K562 (cell line): ENCODE measurements at regions of chr17 and their contacts with region 1.

Region 1: GRCh38 chr17:74790161-74791054 is 14.3 kb upstream of the NAT9 start:
- DNase-seq: no peak
- ATAC-seq: no peak
- H3K4me3 ChIP-seq: no peak overlapping the region
- H3K27ac ChIP-seq: no peak overlapping the region
- H3K4me1 ChIP-seq: peaks cover 0 to 4% of the 10 kb centered on the region in 2 experiments; a peak in 1 of 5 replicates
- H3K27me3 ChIP-seq: no peaks in the 10 kb centered on the region
- CTCF ChIP-seq: no peak
- EP300 ChIP-seq: no peak
- POLR2A ChIP-seq: no peak
- RAD21 ChIP-seq: no peak

Region 2: GRCh38 chr17:74859459-74860228 is 69.2 kb after region 1 on chr17 and contains the start of gene GRIN2C:
- CTCF ChIA-PET with region 1: interaction called, 19 read pairs
- POLR2A ChIA-PET with region 1: no interaction called
- in situ Hi-C with region 1: loop called (anchors 5 kb)
- intact Hi-C with region 1: no loop called
- DNase-seq: peak in 3 of 4 experiments; percentile 52 to 63 (median 60)
- ATAC-seq: 0 out of 3 replicates have a peak, but pooled peaks have one; percentile 23
- H3K4me3 ChIP-seq: peak within 1 kb of the TSS; percentile 24
- H3K27ac ChIP-seq: no peak within 1 kb of the TSS
- H3K4me1 ChIP-seq: peaks cover 2 to 51% of the 10 kb centered on the region in 2 experiments
- H3K27me3 ChIP-seq: peaks cover 0 to 21% of the 10 kb centered on the region in 2 experiments; a peak in 2 of 5 replicates
- CTCF ChIP-seq: peak in 1 of 3 experiments; percentile 45; a peak in 1 of 6 replicates
- EP300 ChIP-seq: no peak
- POLR2A ChIP-seq: no peak
- RAD21 ChIP-seq: no peak
- polyA plus RNA-seq, gene GRIN2C: not detected

Region 3: DNA sequence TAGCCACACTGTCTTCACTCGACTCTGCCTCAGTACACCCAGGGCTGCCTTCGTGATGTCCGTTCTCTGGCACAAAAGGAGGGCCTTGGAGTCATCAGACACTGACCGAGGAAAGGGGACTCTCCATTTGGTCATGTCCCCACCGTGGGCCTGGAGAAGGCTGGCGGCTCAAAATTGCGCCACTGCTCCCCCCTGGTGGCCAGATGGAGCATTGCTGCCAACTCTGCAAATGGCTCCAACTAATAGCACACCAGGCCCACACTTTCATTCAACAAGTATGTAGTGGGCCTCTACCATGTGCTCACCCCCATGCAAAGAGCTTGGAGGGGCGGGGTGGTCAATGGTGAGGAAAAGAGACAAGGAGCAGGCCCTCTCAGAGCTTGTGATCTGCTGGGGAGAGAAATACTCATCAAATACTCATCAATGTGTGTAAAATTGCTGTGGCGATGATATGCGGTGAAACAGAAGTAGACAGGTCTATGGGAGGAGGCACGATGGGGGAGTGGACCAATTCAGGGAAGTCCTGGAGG is 74.5 kb after region 1 on chr17:
- CTCF ChIA-PET with region 1: interaction called, 19 read pairs
- POLR2A ChIA-PET with region 1: interaction called, 3 read pairs
- in situ Hi-C with region 1: no loop called
- intact Hi-C with region 1: loop called (anchors 1 kb)
- DNase-seq: peak; percentile 57 to 83 (median 70)
- ATAC-seq: peak; percentile 74
- H3K4me3 ChIP-seq: no peak overlapping the region
- H3K27ac ChIP-seq: 0 out of 3 replicates have a peak overlapping the region, but pooled peaks have one; percentile 31
- H3K4me1 ChIP-seq: peaks cover 40 to 85% of the 10 kb centered on the region in 2 experiments
- H3K27me3 ChIP-seq: no peaks in the 10 kb centered on the region
- CTCF ChIP-seq: peak; percentile 90 to 98 (median 90)
- EP300 ChIP-seq: no peak
- POLR2A ChIP-seq: no peak
- RAD21 ChIP-seq: peak; percentile 71 to 85